MCF 10A (cell line): ENCODE measurements at regions of chr2 and their contacts with region 1.

Region 1: DNA sequence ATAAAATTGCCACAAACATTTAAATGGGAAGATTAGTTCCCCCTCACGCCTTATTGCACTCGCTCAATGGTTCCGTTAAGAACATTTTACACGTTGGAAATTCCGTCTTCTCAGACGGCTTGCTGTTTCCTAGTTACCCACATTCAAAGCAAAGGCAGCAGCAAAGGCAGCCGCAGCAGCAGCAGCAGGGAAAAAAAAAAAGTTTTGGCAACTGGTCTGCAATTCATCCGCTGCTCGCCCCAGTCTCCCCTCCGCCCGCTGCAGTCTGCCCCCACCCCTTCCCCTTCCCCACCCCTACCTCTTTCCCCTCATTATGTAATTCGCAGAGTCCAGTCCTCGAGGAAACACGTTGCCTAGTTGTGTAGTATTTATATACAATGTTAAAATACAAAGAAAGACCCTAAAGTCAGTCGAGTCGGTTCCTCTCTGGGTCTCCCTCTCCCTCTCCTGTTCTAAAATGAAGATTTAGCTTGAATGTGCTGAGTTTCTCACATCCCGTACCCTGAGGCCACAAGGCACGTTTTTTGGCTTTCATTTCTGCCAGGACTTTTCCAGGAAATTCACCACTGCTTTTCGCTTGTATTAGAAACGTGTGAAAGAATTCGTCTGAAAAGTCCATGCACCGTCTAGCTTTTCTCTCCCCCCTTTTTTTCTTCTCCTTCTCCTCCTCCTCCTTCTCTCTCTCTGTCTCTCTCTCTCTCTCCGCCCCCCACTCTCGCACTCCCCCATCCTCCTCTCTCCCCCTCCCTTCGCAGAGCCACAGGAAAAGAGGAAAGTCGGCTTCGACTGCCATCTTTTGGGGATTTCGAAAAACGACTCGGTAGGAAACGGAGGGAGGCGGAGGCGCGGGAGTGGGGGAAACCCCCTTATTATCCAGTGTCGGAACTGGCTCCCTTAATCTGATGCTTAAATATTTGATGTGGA is 140.0 kb downstream of the MEIS1 start:
- DNase-seq: peak; percentile 83
- H3K4me3 Mint-ChIP-seq: peak overlapping the region; percentile 78
- H3K27ac Mint-ChIP-seq: peak overlapping the region; percentile 59
- H3K4me1 Mint-ChIP-seq: peaks cover 11% of the 10 kb centered on the region
- H3K27me3 Mint-ChIP-seq: peaks cover 28% of the 10 kb centered on the region
- CTCF ChIP-seq: peak; percentile 51

Region 2: GRCh38 chr2:65638443-65638842 is 936.5 kb before region 1 on chr2:
- CTCF ChIA-PET with region 1: interaction called, 5 read pairs
- POLR2A ChIA-PET with region 1: no interaction called
- intact Hi-C with region 1: loop called (anchors 2 kb)
- DNase-seq: no peak
- H3K4me3 Mint-ChIP-seq: no peak overlapping the region
- H3K27ac Mint-ChIP-seq: no peak overlapping the region
- H3K4me1 Mint-ChIP-seq: peaks cover 28% of the 10 kb centered on the region
- H3K27me3 Mint-ChIP-seq: no peaks in the 10 kb centered on the region
- CTCF ChIP-seq: no peak

Region 3: DNA sequence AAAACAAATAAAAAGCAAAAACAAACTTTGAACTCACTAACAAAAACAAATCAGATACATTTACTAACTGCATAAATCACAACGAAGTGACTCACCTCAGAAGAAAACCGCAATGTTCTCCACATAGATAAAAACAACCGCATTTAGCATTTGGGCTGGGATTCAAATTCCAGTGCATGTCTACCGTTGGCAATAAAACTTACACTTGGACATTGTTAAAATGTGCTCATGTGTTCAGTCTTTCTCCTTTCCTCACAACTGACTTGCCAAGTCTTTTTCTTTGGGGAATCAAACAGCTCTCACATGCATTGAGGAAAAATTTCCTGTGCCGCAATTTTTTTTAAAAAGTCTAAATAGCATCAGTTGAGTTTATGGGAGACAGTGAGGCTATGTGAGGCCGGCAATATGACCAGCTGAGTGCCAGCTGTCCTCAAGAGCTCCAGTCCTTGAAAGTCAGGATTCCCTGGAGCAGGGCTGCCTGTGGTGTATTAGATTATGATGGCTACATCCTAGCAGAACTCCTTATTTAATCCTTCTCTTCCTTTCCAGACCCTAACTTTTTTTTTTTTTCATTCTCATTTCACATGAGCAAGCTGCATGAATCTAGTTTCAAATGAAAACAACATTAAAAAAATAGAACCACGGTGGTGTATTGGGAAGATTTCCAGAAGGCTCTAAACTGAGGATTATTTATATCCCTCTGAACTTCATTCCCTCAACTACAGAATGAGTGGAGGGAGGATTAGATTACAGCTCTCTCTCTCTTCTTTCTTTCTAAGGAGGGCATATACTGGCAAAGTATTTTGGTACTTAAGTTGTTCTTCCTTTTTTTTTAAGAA is 210.2 kb before region 1 on chr2:
- CTCF ChIA-PET with region 1: no interaction called
- POLR2A ChIA-PET with region 1: no interaction called
- intact Hi-C with region 1: no loop called
- DNase-seq: peak; percentile 86
- H3K4me3 Mint-ChIP-seq: peak overlapping the region; percentile 21
- H3K27ac Mint-ChIP-seq: peak overlapping the region; percentile 78
- H3K4me1 Mint-ChIP-seq: peaks cover 15% of the 10 kb centered on the region
- H3K27me3 Mint-ChIP-seq: peaks cover 11% of the 10 kb centered on the region
- CTCF ChIP-seq: no peak

Region 4: DNA sequence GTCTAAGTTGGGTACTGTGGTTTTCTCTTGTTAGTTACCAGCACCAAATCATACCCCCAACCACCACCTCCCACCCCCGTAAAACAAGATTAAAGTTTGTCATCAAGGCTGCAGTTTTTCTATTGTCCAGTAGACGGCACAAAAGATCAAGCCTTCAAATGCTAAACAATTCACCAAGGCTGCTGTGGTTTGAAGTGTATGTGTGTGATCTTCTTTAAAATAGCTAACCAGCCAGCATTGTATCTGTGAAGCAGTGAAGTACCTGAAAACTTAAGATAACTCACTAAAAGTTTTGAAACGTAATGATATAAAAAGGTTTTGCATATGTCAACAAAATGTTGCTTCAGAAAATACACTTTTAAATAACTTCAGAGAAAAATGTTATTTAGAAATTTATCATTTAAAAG is 145.9 kb before region 1 on chr2:
- CTCF ChIA-PET with region 1: interaction called, 11 read pairs
- POLR2A ChIA-PET with region 1: interaction called, 47 read pairs
- intact Hi-C with region 1: loop called (anchors 1 kb)
- DNase-seq: peak; percentile 71
- H3K4me3 Mint-ChIP-seq: no peak overlapping the region
- H3K27ac Mint-ChIP-seq: no peak overlapping the region
- H3K4me1 Mint-ChIP-seq: no peaks in the 10 kb centered on the region
- H3K27me3 Mint-ChIP-seq: peaks cover 11% of the 10 kb centered on the region
- CTCF ChIP-seq: peak; percentile 78

Region 5: GRCh38 chr2:66633631-66634030 is 58.7 kb after region 1 on chr2:
- CTCF ChIA-PET with region 1: no interaction called
- POLR2A ChIA-PET with region 1: no interaction called
- intact Hi-C with region 1: no loop called
- DNase-seq: no peak
- H3K4me3 Mint-ChIP-seq: no peak overlapping the region
- H3K27ac Mint-ChIP-seq: no peak overlapping the region
- H3K4me1 Mint-ChIP-seq: no peaks in the 10 kb centered on the region
- H3K27me3 Mint-ChIP-seq: no peaks in the 10 kb centered on the region
- CTCF ChIP-seq: no peak

Region 6: DNA sequence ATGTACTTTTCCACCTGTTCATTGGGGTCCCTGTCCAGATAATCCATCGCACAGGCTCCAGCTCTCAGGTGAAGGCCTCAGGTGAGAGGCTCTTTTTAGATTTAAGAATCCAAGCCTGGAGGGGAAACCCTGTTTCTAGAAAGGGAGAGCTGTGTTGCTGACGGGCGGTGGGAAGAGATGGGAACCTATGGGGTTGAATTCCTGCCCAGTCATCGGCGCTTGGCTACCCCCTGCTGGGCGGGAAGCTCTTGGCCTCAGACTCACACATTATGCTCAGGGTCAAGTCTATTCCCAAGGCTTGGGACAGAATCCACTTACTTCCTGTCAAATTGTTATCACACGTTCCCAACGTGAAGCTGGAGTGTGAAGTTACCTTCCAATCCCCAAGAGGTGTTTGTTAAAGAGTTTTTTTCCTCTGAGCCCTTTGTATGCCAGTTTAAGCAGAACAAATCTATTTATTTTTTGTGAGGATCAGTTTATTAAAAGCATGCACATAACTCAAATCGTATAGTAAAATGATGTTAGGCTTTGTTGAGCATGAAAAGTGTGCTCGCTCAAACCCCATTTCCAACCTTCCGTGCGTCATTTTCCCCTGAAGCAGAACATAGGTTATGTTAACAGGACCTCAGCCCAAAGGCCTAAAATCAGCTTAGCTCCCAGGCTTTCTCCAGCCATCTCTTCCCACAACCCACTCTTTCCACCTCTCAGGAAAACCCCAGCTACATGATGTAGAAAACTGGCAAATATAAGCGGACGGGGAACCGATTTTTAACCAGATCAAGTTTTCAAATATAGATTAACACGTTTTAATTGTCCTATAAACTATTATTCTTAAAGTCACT is 640.5 kb after region 1 on chr2:
- CTCF ChIA-PET with region 1: interaction called, 4 read pairs
- POLR2A ChIA-PET with region 1: interaction called, 3 read pairs
- intact Hi-C with region 1: loop called (anchors 2 kb)
- DNase-seq: peak; percentile 76
- H3K4me3 Mint-ChIP-seq: peak overlapping the region; percentile 21
- H3K27ac Mint-ChIP-seq: peak overlapping the region; percentile 32
- H3K4me1 Mint-ChIP-seq: peaks cover 6% of the 10 kb centered on the region
- H3K27me3 Mint-ChIP-seq: no peaks in the 10 kb centered on the region
- CTCF ChIP-seq: peak; percentile 77

Region 7: DNA sequence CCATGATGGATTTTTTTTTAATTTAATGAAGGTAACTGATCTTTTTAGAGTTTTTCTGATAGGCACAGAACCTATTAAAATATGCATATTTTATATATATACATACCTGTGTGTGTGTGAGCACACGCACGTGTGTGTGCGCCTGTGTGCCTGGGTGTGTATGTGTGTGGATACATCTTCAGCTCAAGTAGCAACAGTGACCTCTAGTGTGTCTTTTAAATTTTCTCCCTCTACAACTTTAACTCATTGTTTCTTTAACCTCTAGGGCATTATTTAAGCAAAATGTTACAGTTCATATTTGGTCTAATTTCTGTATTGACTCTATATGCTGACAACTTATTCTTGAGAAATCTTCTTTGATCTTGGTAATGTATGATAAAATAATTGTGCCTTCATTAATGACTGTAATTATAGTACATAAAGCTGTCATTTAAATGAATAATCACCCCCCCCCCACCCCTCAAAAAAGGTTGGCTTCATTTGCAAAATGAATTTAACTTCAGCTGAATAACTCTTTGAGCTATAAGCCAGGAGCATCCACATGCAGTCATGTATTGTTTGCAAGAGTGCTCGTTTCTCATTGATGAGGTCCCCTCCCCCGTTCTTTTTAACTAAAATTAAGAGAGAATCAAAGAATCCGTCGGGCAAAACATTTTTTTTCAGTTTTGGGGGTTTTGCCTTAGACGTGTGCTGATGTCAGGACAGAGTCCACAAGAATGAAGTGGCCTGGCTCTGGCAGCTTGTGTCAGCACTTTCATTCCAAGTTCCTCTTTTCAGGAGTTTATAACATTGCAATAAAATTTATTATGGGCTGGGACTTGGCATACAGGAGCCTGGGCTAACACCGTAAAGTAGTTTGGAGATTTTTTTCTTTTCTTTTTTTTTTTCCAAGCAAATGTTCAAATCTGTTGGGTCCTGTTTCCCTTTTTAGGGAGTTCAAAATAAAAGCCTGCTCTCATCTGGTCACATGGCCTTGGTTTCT is 902.1 kb after region 1 on chr2:
- CTCF ChIA-PET with region 1: no interaction called
- POLR2A ChIA-PET with region 1: no interaction called
- intact Hi-C with region 1: loop called (anchors 5 kb)
- DNase-seq: peak; percentile 56
- H3K4me3 Mint-ChIP-seq: no peak overlapping the region
- H3K27ac Mint-ChIP-seq: peak overlapping the region; percentile 7
- H3K4me1 Mint-ChIP-seq: no peaks in the 10 kb centered on the region
- H3K27me3 Mint-ChIP-seq: no peaks in the 10 kb centered on the region
- CTCF ChIP-seq: peak; percentile 50

Region 8: DNA sequence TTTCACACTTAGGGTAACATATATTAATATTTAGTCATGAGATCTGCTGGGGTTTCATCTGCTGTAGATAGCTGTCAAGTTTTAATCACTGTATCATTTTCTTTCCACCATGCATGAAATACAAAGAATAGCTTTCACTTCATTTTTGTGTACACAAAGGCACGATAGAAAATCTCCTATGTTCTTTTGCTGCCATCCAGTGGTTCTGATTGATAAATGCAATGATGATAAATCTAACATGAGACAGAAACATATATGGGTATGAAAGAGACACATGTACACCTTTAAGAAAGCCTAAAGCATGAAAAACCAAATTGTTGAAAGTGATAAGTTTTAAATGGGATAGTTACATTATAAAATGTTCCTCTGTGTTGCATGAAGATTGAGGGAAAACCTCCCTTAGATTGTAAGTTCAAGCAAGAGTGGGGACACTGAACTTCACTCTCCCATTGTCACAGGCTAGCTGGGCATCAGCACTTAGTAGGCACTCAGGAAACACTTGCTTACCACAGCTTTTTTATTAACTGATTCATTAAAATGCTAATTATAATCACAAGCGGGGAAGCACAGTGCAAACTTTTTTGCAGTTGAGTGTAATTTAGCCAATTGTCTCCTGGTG is 1456.7 kb after region 1 on chr2:
- CTCF ChIA-PET with region 1: no interaction called
- POLR2A ChIA-PET with region 1: no interaction called
- intact Hi-C with region 1: loop called (anchors 2 kb)
- DNase-seq: peak; percentile 71
- H3K4me3 Mint-ChIP-seq: no peak overlapping the region
- H3K27ac Mint-ChIP-seq: no peak overlapping the region
- H3K4me1 Mint-ChIP-seq: peaks cover 5% of the 10 kb centered on the region
- H3K27me3 Mint-ChIP-seq: no peaks in the 10 kb centered on the region
- CTCF ChIP-seq: peak; percentile 66